Calu3 (cell line): ENCODE measurements at regions of chr6 and their contacts with region 1.

Region 1: GRCh38 chr6:50128420-50129005 is 78.8 kb upstream of the DEFB112 start:
- DNase-seq: no peak
- H3K4me3 Mint-ChIP-seq: no peak overlapping the region
- H3K27ac Mint-ChIP-seq: no peak overlapping the region
- H3K4me1 Mint-ChIP-seq: no peaks in the 10 kb centered on the region
- H3K27me3 Mint-ChIP-seq: no peaks in the 10 kb centered on the region
- CTCF ChIP-seq: peak; percentile 36

Region 2: GRCh38 chr6:49980898-49981297 is 147.6 kb before region 1 on chr6:
- CTCF ChIA-PET with region 1: no interaction called
- intact Hi-C with region 1: no loop called
- DNase-seq: no peak
- H3K4me3 Mint-ChIP-seq: no peak overlapping the region
- H3K27ac Mint-ChIP-seq: no peak overlapping the region
- H3K4me1 Mint-ChIP-seq: peaks cover 22% of the 10 kb centered on the region
- H3K27me3 Mint-ChIP-seq: no peaks in the 10 kb centered on the region
- CTCF ChIP-seq: no peak

Region 3: DNA sequence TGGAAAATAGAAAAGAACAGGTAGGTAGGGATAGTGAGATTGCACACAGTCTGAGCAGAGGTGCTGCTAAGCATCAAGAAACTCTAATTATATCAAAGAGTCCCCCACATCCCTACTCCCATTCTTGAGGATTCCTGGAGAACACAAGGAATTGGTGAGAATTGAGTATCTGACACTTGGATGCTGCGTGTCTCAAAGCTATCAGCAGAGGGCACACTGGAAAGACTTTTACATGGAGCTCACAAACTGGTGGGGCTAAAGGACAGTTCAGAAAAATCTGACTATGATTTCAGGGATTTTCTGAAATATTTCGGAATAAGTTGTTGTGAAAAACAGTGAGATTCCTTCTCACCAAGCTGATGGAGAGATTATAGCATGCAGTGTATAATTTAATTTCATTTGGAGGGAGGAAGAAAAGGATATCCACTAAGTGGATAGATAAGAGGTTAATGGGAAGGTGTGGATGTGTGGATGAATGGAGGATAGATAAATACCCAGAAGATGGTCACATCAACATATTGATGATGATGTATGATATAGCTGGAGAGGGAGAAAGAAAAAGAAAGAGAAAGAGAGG is 136.6 kb after region 1 on chr6:
- CTCF ChIA-PET with region 1: interaction called, 3 read pairs
- intact Hi-C with region 1: loop called (anchors 5 kb)
- DNase-seq: peak; percentile 10
- H3K4me3 Mint-ChIP-seq: no peak overlapping the region
- H3K27ac Mint-ChIP-seq: no peak overlapping the region
- H3K4me1 Mint-ChIP-seq: no peaks in the 10 kb centered on the region
- H3K27me3 Mint-ChIP-seq: no peaks in the 10 kb centered on the region
- CTCF ChIP-seq: peak; percentile 31

Region 4: GRCh38 chr6:50602292-50602691 is 473.8 kb after region 1 on chr6:
- CTCF ChIA-PET with region 1: interaction called, 4 read pairs
- intact Hi-C with region 1: loop called (anchors 1 kb)
- DNase-seq: peak; percentile 24
- H3K4me3 Mint-ChIP-seq: no peak overlapping the region
- H3K27ac Mint-ChIP-seq: no peak overlapping the region
- H3K4me1 Mint-ChIP-seq: no peaks in the 10 kb centered on the region
- H3K27me3 Mint-ChIP-seq: no peaks in the 10 kb centered on the region
- CTCF ChIP-seq: peak; percentile 46

Region 5: GRCh38 chr6:50791900-50792508 is 663.5 kb after region 1 on chr6:
- CTCF ChIA-PET with region 1: no interaction called
- intact Hi-C with region 1: loop called (anchors 2 kb)
- DNase-seq: peak; percentile 29
- H3K4me3 Mint-ChIP-seq: no peak overlapping the region
- H3K27ac Mint-ChIP-seq: no peak overlapping the region
- H3K4me1 Mint-ChIP-seq: no peaks in the 10 kb centered on the region
- H3K27me3 Mint-ChIP-seq: peaks cover 17% of the 10 kb centered on the region
- CTCF ChIP-seq: peak; percentile 46